ENCODE measurements at regions of chr16 and their contacts with region 1.

Region 1: GRCh38 chr16:69577446-69577845 is 11.7 kb downstream of the NFAT5 start:
- DNase-seq: no peak
- ATAC-seq: no peak
- H3K4me3 Mint-ChIP-seq: no peak overlapping the region
- H3K27ac Mint-ChIP-seq: no peak overlapping the region
- H3K4me1 Mint-ChIP-seq: peaks cover 37% of the 10 kb centered on the region
- H3K27me3 Mint-ChIP-seq: no peaks in the 10 kb centered on the region

Region 2: DNA sequence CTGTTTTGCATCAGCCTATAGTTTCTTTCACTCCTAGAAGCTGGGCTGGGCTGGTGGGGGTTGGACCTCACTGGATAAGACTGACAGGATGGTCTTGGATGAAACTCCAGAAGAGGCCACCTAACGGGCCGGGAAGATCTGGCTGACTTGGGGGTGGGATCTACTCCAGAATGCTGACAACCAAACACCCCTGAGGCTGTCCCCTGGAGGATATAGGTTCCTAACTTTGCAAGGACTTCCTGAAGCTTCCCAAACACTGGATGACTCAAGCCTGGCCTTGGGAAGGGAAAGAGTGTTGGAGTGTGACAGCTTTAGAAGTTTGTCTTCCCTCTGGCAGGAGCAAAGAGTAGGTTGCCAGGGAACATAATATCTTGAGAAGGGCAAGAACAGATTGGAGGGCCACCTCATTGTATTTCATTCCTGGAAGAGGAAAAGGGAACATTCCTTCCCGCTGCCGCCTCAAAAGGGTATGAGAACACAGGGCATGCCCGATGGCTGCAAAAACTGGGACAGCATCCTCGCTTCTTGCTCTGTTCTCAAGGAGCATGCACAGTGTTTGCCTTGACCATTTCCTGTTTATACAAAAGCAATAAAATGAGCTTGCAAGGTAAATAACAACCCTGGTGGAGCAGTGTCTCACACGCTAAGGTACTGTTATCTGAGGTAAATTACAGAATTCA is 159.8 kb before region 1 on chr16:
- CTCF ChIA-PET with region 1: no interaction called
- POLR2A ChIA-PET with region 1: no interaction called
- intact Hi-C with region 1: no loop called
- DNase-seq: no peak
- ATAC-seq: no peak
- H3K4me3 Mint-ChIP-seq: no peak overlapping the region
- H3K27ac Mint-ChIP-seq: no peak overlapping the region
- H3K4me1 Mint-ChIP-seq: peaks cover 3% of the 10 kb centered on the region
- H3K27me3 Mint-ChIP-seq: no peaks in the 10 kb centered on the region

Region 3: DNA sequence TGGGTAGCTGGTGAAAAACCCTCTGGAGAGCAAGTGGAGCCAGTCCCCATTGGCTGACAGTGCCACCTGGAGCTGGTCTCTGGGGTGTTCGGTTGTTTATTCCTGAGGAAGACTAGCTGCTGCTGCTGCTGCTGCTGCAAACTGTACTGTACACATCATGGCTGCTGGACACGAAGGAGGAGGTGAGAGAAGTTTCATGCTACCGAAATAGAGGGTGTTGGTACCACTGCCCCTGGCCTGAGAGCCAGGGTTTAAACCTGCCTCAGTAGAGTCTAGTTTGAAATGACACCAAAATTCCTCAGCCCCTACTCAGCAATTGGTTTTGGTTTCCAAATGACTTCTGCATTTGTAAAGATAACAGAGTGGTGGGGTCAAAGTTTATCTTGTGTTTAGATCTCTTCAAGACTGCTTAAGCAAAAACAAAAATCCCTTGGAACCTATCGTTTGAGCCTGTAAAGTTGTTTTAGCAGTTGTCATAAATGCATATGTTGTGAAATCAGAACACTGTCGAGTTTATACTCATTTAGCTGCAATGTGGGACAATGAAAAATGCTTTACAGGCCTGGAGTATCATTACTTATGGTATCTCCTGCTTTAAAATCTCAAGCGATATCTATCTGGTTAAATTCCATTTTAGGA is 112.2 kb before region 1 on chr16:
- CTCF ChIA-PET with region 1: no interaction called
- POLR2A ChIA-PET with region 1: no interaction called
- intact Hi-C with region 1: no loop called
- DNase-seq: peak; percentile 26
- ATAC-seq: peak; percentile 65
- H3K4me3 Mint-ChIP-seq: no peak overlapping the region
- H3K27ac Mint-ChIP-seq: peak overlapping the region; percentile 48
- H3K4me1 Mint-ChIP-seq: peaks cover 49% of the 10 kb centered on the region
- H3K27me3 Mint-ChIP-seq: no peaks in the 10 kb centered on the region

Region 4: GRCh38 chr16:69600202-69600601 is 22.8 kb after region 1 on chr16:
- CTCF ChIA-PET with region 1: no interaction called
- POLR2A ChIA-PET with region 1: interaction called, 16 read pairs
- intact Hi-C with region 1: no loop called
- DNase-seq: no peak
- ATAC-seq: no peak
- H3K4me3 Mint-ChIP-seq: no peak overlapping the region
- H3K27ac Mint-ChIP-seq: no peak overlapping the region
- H3K4me1 Mint-ChIP-seq: peaks cover 37% of the 10 kb centered on the region
- H3K27me3 Mint-ChIP-seq: no peaks in the 10 kb centered on the region